Gastrocnemius medialis (tissue), 4 donors: ENCODE measurements at regions of chrX and their contacts with region 1.

Region 1: DNA sequence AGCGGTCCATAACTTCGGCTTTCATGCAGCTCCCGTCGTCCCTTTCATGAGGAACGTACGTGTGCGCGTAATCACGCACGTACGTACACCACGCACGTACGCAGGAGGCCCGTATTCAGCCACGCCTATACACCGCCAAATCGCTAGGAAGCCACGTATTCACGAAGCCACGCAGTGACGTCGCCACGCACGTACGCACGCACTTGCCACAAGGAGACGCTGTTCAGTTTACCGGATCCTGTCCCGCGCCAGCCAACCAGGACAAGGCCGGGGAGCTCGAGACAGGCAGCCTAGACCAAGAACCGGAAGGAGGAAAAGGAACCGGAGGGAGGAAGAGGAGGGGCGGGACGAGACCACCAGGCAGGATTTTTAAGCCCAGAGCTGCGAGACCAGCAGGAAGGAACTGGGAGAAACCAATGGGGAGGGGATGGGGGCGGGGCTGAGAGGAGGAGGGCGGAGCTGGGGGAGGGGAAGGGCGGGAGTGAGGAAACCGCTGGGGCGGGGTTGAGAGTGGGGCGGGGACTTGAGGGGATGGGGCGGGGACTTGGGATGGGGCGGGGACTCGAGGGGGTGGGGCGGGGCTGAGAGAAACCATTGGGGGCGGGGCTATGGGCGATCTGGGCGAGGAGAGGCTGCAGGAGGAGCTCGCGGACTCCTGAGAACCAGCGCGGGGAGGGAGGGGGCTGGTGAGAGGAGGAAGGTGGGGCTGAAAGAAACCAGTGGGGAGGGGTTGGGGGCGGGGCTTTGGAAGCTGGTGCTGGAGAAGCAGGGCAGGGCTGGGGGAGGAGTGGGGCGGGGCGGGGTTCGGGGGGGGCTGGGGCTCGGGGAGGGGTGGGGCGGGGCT is at the start of gene EOLA2:
- DNase-seq: peak; percentile 92 to 95
- ATAC-seq: peak; percentile 66 to 74
- H3K4me3 ChIP-seq: peak within 1 kb of the TSS; percentile 69 to 84 (median 74)
- H3K27ac ChIP-seq: peak within 1 kb of the TSS; percentile 90 to 96 (median 93)
- H3K4me1 ChIP-seq: peaks cover 6 to 7% of the 10 kb centered on the region in 2 donors
- H3K27me3 ChIP-seq: no peaks in the 10 kb centered on the region
- CTCF ChIP-seq: peak in 4 of 5 experiments; percentile 43 to 62 (median 52)
- POLR2A ChIP-seq: peak; percentile 53 to 55
- total RNA-seq, gene EOLA2: 7.2 to 17.1 (median 11.0) TPM

Region 2: DNA sequence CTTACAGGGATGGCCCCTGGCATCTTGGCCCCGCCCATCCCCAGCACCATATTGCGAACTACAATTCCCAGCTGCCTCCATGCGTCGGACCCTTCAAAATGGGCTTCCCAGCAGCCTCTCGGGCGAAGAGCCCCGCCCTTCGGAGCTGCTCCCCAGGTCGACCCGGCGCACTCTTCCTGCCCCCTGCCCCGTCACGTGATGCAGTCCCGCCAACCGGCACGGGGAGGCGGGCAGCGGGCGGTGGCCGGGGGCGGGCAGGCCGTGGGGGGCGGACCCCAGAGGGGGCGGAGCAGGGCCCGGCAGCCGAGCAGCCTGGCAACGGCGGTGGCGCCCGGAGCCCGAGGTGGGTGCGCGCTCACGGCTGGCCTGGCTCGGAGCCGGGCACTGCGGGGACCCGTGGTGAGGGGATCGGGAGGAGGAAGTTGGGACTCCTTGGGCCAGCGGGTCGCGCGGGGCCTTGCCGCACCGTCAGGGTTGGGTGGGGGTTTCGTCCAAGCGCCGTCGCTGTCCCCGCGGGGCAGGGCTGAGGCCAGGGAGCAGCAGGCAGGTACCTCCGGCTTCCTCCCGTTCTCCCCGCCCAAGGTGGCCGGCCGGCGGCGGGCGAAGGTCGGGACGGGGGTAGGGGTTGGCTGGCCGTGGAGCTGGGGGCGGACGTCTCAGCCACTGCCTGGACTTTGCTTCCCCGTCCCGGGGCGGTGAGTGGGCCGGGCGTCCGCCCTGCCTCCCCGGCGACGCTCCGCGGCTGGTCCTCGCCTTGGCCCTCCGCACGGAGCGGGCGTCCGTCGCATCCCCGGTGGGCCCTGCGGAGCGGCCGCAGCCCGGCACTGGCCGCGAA is 629.9 kb after region 1 on chrX and contains the start of gene MTM1:
- in situ Hi-C with region 1: no loop called
- intact Hi-C with region 1: loop called (anchors 10 kb)
- DNase-seq: peak; percentile 91 to 95
- ATAC-seq: peak; percentile 93 to 94
- H3K4me3 ChIP-seq: peak within 1 kb of the TSS; percentile 64 to 71 (median 70)
- H3K27ac ChIP-seq: peak within 1 kb of the TSS; percentile 76 to 87 (median 82)
- H3K4me1 ChIP-seq: peaks cover 16 to 30% of the 10 kb centered on the region in 2 donors
- H3K27me3 ChIP-seq: no peaks in the 10 kb centered on the region
- CTCF ChIP-seq: no peak
- POLR2A ChIP-seq: peak; percentile 58 to 63
- total RNA-seq, gene MTM1: 6.3 to 18.1 (median 11.5) TPM